Heart left ventricle (tissue), 16 donors: ENCODE measurements at regions of chr2 and their contacts with region 1.

Region 1: GRCh38 chr2:69625078-69625795 is 18.3 kb downstream of the AAK1 start:
- DNase-seq: no peak
- ATAC-seq: peak in 2 of 4 donors; percentile 38 to 43
- H3K4me3 ChIP-seq: no peak overlapping the region
- H3K27ac ChIP-seq: peak overlapping the region in 1 of 12 donors; percentile 25
- H3K4me1 ChIP-seq: peaks cover 9 to 85% (median 41%) of the 10 kb centered on the region in 12 donors
- H3K27me3 ChIP-seq: no peaks in the 10 kb centered on the region
- CTCF ChIP-seq: no peak
- POLR2A ChIP-seq: no peak

Region 2: GRCh38 chr2:69509007-69509749 is 116.1 kb before region 1 on chr2:
- intact Hi-C with region 1: no loop called
- DNase-seq: peak in 2 of 5 donors; percentile 33 to 35
- ATAC-seq: peak in 3 of 4 donors; percentile 26 to 54 (median 46)
- H3K4me3 ChIP-seq: no peak overlapping the region
- H3K27ac ChIP-seq: peak overlapping the region in 1 of 12 donors; percentile 10
- H3K4me1 ChIP-seq: peaks cover 0 to 33% (median 10%) of the 10 kb centered on the region in 12 donors
- H3K27me3 ChIP-seq: no peaks in the 10 kb centered on the region
- CTCF ChIP-seq: no peak
- POLR2A ChIP-seq: no peak

Region 3: DNA sequence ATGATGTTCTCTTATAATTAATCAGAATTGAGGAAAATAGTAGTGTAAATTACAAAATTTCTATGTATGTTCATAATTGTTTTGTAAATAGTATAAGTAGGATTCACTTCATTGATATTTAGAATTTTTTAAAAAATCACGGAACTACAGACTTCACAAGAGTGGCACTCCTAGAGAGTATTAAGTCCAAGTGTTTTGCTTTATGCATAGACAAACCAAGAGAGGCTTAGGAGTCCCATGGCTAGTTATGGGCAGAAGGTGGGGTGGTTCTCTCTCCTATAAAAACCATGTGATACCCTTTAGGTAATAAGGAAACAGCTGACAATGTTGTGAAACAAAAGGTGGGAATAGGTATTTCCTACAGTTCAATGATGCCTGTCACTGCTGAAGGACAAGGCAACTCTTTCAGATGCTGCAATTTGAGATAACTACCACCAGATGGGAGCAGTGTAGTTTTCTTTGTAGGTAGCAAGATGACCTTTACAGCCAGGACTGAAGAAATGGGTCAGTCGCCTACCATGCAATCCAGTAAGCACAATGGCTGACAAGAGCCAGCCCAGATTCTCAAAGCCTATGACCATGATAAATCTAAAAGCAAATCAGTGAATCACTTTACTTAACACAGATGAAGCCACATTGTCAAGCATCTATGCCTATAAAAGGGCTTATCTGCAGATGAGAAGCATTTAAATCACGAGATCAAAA is 65.6 kb before region 1 on chr2:
- intact Hi-C with region 1: loop called in 2 of 10 experiments (anchors 5 to 10 kb)
- DNase-seq: no peak
- ATAC-seq: peak; percentile 30 to 81 (median 77)
- H3K4me3 ChIP-seq: no peak overlapping the region
- H3K27ac ChIP-seq: peak overlapping the region in 4 of 12 donors; percentile 4 to 47 (median 31)
- H3K4me1 ChIP-seq: peaks cover 10 to 62% (median 38%) of the 10 kb centered on the region in 12 donors
- H3K27me3 ChIP-seq: no peaks in the 10 kb centered on the region
- CTCF ChIP-seq: peak; percentile 49 to 75 (median 66)
- POLR2A ChIP-seq: no peak